Activated CD8-positive, alpha-beta T cell treated with anti-CD3 and anti-CD28 coated beads, Interleukin-2, amount 10 ng/mL, durations not matched to agents 7 days and 5 days (primary cell): ENCODE measurements at regions of chr6 and their contacts with region 1.

Region 1: DNA sequence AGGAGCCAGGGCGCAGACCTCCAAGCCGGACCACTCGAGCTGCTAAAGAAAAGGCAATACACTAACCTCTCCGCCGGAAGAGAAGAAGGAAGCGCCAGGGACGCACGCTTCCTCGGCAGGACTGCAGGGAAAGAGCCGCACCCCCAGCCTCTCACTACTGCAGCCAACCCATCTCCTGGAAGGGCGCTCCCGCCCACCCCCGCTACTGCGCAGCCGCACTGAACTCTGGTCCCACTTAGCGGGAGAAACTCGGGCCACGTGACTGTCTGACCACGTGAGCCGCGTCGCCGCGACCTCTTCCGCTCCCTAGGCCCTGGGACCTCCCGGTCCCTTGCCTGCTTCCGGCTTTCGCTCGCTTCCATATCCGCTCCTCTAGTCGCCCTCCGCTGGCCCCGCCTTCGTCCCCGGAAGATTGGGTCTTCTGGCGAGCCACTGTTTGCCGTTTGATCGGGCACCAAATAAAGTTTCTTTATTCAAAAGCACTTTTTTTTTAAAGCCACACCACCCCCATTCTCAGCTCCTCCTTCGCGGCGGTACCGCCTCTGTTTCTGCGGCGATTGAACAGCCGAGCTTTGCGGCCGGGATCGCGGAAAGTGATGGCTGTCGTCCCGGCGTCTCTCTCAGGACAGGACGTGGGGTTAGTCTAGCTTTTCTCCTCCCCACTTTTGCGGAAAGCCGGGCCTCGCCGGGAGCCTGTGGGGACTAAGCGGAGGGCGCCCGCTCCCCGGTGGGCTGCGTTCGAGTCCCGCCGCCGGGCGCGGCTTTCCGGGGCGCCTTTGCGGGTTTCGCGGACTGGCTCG is at the start of gene RMND1:
- DNase-seq: peak; percentile 100
- ATAC-seq: peak; percentile 98
- H3K4me3 Mint-ChIP-seq: peak within 1 kb of the TSS; percentile 99
- H3K27ac Mint-ChIP-seq: peak within 1 kb of the TSS; percentile 94
- H3K4me1 Mint-ChIP-seq: peaks cover 26% of the 10 kb centered on the region
- H3K27me3 Mint-ChIP-seq: no peaks in the 10 kb centered on the region
- total RNA-seq, gene RMND1: 18.6 to 19.2 TPM

Region 2: GRCh38 chr6:151075527-151075926 is 376.6 kb before region 1 on chr6:
- CTCF ChIA-PET with region 1: no interaction called
- POLR2A ChIA-PET with region 1: no interaction called
- DNase-seq: no peak
- ATAC-seq: no peak
- H3K4me3 Mint-ChIP-seq: no peak overlapping the region
- H3K27ac Mint-ChIP-seq: no peak overlapping the region
- H3K4me1 Mint-ChIP-seq: no peaks in the 10 kb centered on the region
- H3K27me3 Mint-ChIP-seq: no peaks in the 10 kb centered on the region

Region 3: DNA sequence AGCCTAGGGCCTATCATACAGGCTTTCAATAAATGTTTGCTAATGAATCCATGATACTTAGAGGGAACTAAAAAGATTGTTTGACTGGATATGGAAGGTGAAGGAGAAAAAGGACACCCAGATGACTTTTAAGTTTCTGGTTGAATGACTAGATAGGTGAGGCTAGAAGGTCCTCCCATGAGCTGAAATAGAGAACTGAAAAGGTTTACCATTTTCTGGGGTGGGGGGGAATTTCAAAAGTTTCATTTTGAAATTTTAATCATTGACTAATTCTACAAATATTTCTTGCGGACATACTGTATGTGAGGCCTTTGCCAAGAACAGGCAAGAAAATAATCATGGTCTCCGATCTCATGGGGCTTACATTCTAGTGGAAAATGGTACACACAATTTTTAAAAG is 42.9 kb before region 1 on chr6:
- CTCF ChIA-PET with region 1: interaction called, 11 read pairs
- POLR2A ChIA-PET with region 1: no interaction called
- DNase-seq: no peak
- ATAC-seq: no peak
- H3K4me3 Mint-ChIP-seq: no peak overlapping the region
- H3K27ac Mint-ChIP-seq: no peak overlapping the region
- H3K4me1 Mint-ChIP-seq: peaks cover 25% of the 10 kb centered on the region
- H3K27me3 Mint-ChIP-seq: no peaks in the 10 kb centered on the region